ENCODE measurements at regions of chr17 and their contacts with region 1.

Region 1: DNA sequence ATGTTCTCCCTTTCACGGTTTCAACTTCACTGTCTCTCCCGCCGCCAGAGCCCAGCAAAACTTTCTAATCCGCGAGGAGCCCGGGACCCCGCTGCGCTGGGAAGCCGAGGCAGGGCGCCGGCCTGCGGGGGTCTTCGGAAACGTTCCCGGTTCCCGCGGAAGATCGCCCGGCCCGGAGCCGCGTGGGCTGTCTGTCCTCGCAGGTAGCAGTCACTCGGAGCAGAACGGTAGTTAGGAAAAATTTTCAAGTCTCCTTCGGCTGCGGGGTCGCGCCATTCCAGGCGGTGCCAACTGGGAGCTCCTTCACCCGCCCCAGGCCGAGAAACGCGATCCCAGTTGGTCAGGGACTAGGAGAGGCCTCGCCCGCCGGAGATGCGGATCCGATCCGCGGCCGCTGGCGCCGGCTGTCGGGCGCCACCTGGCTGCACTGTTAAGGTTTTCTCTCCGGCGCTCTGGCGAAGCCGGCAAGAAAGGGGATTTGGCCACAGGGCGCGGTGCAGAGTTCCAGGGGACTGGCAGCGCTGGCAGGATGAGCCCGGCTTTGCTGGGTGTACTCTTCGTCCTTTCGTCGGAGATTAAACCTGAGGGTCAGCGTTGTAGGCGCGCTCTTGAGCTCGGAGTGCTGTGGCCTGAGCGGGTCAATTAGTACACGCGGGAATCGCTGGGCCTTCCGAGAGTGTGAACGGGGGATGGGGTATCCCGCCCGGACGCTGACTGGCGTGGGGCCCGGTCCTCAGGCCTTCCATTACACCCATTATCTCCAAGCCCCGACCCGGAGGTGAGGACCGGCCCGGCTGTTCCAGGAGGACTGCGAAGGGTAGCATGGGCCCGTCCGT is 135.4 kb downstream of the KCNJ12 start:
- DNase-seq: peak; percentile 7
- H3K4me3 ChIP-seq: peak overlapping the region; percentile 41
- H3K27me3 ChIP-seq: peaks cover 4% of the 10 kb centered on the region
- CTCF ChIP-seq: peak; percentile 87

Region 2: DNA sequence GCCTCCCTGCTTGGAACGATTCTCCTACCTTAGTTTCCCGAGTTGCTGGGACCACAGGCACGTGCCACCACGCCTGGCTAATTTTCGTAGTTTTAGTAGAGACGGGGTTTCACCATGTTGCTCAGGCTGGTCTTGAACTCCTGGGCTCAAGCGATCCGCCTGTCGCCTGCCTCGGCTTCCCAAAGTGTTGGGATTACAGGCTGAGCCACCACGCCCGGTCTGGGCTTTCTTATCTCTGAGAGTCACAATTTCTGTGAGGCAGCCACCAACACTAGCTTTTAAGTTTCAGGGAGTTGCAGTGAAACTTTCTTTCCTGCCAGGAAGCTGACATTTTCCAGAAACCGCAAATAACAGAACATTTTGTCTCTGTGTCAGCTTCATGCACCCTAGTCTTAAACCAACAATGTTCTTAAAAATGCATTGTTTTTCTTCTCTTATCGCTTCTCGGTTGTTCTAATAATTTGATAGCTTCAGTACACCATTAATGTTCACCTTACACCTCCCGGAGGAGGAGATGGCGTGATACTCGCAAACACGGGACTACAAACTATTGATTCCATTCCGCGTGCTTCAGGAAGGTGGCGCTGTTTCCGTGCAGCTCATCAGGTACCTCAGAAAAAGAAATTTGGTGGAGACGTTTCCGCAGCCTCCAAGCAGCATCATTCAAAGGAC is 392.2 kb before region 1 on chr17:
- CTCF ChIA-PET with region 1: interaction called, 30 read pairs
- POLR2A ChIA-PET with region 1: no interaction called
- DNase-seq: no peak
- H3K4me3 ChIP-seq: no peak overlapping the region
- H3K27me3 ChIP-seq: peaks cover 9% of the 10 kb centered on the region
- CTCF ChIP-seq: peak; percentile 92

Region 3: DNA sequence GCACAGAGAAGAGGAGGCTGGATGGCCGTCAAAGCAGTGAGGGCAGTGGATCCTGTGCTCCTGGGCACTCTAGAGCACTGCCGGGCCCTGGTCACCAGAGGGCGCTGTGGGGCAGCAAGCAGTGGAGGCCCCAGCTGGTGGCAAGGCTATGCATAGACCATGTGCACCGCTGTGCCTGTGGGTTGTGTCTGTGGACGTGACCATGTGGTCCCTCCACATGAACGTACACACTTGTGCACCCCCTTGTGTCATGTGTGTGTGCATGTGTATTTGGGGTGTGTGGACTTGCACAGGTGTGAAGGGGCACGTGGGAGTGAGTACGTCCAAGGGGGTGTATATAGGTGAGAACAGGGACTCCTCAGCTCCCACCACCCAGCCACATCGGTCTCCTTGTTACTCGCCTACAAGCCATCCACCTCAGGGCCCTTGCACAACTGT is 231.5 kb before region 1 on chr17:
- CTCF ChIA-PET with region 1: interaction called, 12 read pairs
- POLR2A ChIA-PET with region 1: no interaction called
- DNase-seq: no peak
- H3K4me3 ChIP-seq: no peak overlapping the region
- H3K27me3 ChIP-seq: no peaks in the 10 kb centered on the region
- CTCF ChIP-seq: peak; percentile 100

Region 4: DNA sequence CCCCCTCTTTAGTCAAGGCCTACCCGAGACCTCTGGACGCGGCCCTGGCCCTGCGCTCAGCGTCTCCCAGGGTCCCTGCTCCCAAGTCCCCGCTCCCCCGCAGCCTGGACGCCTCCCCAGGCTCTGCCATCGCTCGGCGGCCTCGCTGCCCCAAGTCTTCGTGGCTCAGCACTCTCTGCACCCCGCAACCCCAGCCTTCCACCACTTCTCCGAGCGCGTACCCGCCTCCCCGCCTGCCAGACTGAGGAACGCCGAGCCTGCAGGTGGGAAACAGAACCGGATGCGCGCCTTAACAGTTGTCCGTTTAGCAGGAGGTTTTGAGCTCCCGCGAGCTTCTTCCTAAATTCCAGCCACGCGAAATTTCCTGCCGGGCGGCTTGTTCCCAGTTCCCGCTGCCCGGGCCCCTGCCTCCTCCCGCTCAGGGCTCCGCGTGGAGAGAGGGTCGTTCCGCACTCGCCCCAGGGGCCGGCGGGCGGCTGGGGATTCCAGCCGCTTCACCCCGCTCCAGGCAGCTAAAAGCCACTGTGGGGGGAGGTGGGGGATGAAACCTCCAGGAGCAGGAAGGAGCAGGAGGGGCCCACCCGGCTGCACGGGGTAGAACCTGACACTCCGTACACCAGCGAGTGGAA is 47.7 kb before region 1 on chr17:
- CTCF ChIA-PET with region 1: interaction called, 112 read pairs
- POLR2A ChIA-PET with region 1: no interaction called
- DNase-seq: no peak
- H3K4me3 ChIP-seq: no peak overlapping the region
- H3K27me3 ChIP-seq: peaks cover 14% of the 10 kb centered on the region
- CTCF ChIP-seq: no peak

Region 5: GRCh38 chr17:21524211-21524591 is 12.6 kb after region 1 on chr17:
- CTCF ChIA-PET with region 1: interaction called, 32 read pairs
- POLR2A ChIA-PET with region 1: no interaction called
- DNase-seq: no peak
- H3K4me3 ChIP-seq: no peak overlapping the region
- H3K27me3 ChIP-seq: no peaks in the 10 kb centered on the region
- CTCF ChIP-seq: no peak

Region 6: DNA sequence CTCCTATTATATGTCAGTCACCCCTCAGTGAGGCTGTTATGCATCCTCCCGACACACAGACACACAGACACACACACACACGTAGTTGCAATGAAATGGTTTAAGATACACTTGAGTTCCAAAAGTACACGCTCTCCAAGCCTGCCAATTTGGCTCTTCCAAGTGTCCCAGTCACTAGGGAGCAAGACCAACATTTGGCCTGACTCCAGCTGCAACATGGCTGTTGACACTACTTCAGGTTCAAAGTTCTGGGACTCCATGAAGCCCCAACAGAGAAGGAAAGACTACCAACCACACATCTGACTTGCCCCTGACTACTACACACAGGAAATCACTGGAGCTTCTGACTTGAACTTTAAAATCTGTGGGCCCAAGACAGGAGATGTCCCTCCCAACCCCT is 52.7 kb after region 1 on chr17:
- CTCF ChIA-PET with region 1: no interaction called
- POLR2A ChIA-PET with region 1: no interaction called
- DNase-seq: no peak
- H3K4me3 ChIP-seq: no peak overlapping the region
- H3K27me3 ChIP-seq: no peaks in the 10 kb centered on the region
- CTCF ChIP-seq: no peak